Aorta (tissue), 5 donors: ENCODE measurements at regions of chr5 and their contacts with region 1.

Region 1: DNA sequence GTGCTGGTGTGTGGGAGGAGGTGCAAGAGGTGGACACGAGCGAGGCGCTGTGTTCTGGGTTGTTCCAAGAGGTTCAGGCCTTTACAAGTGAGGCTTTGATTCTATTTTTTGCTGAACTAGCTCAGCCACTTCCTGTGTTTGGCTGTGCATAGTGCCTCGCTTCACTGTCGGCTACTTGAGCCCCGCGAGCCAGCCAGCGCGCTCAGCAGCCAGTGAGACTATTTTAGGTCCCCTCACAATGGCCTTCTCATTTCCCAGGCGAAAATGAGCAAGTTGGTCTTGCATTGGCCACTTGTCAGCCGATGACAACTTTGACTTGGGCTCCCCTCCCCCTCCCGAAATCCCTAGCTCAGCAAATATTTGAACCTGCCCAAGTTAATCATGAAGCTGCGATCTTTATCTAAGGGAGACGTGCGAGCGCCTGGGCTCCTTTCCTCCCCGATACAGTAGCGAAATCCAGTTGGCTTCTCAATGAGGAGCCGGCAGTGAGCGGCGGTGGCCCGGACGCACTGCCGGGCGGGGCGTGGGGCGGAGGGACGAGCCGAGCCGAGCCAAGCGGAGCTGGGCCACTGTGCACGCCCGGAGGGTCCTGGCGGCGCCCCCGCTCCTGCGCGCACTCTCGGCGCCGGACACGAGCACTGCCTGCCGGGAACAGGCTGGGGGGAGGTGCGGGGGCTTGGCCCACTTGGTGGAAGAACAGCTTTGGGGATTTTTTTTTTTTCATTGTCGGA is 72.6 kb downstream of the PIK3R1 start:
- DNase-seq: peak; percentile 80 to 88
- ATAC-seq: peak; percentile 86
- H3K4me3 ChIP-seq: peak overlapping the region; percentile 11 to 29
- H3K27ac ChIP-seq: peak overlapping the region in 1 of 2 donors; percentile 65
- H3K4me1 ChIP-seq: peaks cover 0 to 3% of the 10 kb centered on the region in 2 donors
- H3K27me3 ChIP-seq: no peaks in the 10 kb centered on the region

Region 2: DNA sequence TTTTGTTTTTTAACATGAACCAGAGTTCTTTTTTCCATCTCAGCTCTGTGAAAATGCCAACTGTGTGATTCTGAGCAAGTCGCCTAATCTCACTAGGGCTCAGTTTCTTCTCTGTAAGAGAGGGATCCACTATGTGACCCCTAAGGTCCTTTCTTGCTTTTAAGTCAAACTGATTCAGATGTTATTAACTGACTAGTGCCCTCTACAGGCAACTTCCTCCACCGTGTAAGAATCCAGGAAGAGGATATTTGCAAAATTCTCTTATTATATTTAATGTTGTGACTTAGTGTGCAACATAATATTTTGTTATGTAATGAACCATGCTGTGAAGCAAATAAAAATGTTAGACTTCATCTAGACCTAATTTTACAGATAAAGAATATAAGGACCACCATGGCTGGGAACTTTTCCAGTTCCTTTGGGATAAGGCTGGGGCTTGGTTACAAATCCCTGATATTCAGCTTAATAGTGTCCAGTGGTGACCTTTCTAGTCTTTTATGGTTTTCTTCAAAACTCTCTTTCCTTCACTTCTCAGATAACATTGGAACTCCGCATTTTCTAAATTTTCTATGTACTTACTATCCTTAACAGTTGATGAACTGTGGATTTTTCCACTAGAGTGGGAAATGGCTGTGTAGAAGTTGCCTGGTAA is 172.1 kb after region 1 on chr5:
- intact Hi-C with region 1: loop called (anchors 2 to 5 kb)
- DNase-seq: no peak
- ATAC-seq: peak; percentile 58
- H3K4me3 ChIP-seq: no peak overlapping the region
- H3K27ac ChIP-seq: no peak overlapping the region
- H3K4me1 ChIP-seq: no peaks in the 10 kb centered on the region
- H3K27me3 ChIP-seq: no peaks in the 10 kb centered on the region

Region 3: GRCh38 chr5:68962757-68963484 is 674.8 kb after region 1 on chr5:
- intact Hi-C with region 1: loop called (anchors 5 kb)
- DNase-seq: peak; percentile 62 to 80
- ATAC-seq: peak; percentile 86
- H3K4me3 ChIP-seq: no peak overlapping the region
- H3K27ac ChIP-seq: no peak overlapping the region
- H3K4me1 ChIP-seq: no peaks in the 10 kb centered on the region
- H3K27me3 ChIP-seq: no peaks in the 10 kb centered on the region